ACHN (cell line): ENCODE measurements at regions of chr6 and their contacts with region 1.

Region 1: GRCh38 chr6:117449549-117450439 is 24.1 kb upstream of the ROS1 start:
- DNase-seq: peak; percentile 75

Region 2: GRCh38 chr6:117354671-117355070 is 95.1 kb before region 1 on chr6:
- in situ Hi-C with region 1: no loop called
- DNase-seq: no peak

Region 3: DNA sequence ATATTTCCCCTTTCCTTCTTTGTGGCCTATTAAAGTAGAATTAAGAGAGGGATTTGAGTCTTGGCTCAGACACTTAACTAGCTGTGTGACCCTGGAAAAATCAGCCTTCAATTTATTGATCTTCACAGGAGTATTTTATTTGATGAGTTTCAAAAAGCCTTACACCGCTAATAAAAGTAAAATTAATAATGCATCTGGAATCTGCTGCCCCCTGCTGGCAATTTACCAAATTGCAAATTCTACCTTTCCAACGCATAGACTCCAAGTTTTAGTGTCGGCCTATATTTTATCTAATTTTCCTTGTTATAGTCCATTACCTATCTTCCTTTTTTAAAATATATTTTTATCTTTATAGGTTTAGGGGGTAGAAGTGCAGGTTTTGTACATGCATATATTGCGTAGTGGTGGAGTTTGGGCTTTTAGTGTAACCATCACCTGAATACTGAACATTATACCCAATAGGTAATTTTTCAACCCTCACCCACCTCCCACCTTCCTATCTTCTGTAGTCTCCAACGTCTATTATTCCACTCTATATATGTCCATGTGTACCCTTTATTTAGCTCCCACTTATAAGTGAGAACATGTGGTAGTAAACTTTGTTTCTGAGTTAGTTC is 106.2 kb after region 1 on chr6:
- in situ Hi-C with region 1: loop called (anchors 25 kb)
- DNase-seq: peak; percentile 46